Sigmoid colon (tissue), 7 donors: ENCODE measurements at regions of chr13 and their contacts with region 1.

Region 1: GRCh38 chr13:97116754-97117153 is 105.4 kb upstream of the MBNL2 start:
- DNase-seq: peak; percentile 74
- H3K4me3 ChIP-seq: no peak overlapping the region
- H3K27ac ChIP-seq: peak overlapping the region; percentile 81 to 90 (median 84)
- H3K4me1 ChIP-seq: peaks cover 0 to 89% (median 75%) of the 10 kb centered on the region in 4 donors
- H3K27me3 ChIP-seq: no peaks in the 10 kb centered on the region
- CTCF ChIP-seq: no peak
- EP300 ChIP-seq: peak in 3 of 4 donors; percentile 51 to 83 (median 80)
- POLR2A ChIP-seq: no peak

Region 2: DNA sequence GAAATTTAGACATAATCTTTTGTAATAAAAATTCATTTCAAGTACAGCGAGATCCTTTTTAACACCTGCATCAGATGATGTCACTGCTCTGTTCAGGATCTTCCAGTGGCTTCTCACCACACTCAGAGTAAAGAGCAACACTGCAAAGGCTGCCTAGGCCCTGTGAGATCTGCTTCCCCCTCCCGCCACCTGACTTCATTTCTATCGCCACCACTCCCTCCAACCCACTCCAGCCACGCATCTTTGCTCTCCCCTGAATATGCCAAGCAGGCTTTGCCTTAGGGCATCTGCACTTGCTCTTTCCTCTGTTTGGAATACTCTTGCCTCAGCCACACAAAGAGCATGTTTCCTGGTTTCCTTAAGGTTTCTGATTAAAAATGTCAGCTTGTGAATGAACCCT is 163.7 kb after region 1 on chr13:
- intact Hi-C with region 1: loop called (anchors 5 kb)
- DNase-seq: no peak
- H3K4me3 ChIP-seq: no peak overlapping the region
- H3K27ac ChIP-seq: peak overlapping the region; percentile 72 to 89 (median 80)
- H3K4me1 ChIP-seq: peaks cover 0 to 99% (median 91%) of the 10 kb centered on the region in 4 donors
- H3K27me3 ChIP-seq: no peaks in the 10 kb centered on the region
- CTCF ChIP-seq: no peak
- EP300 ChIP-seq: no peak
- POLR2A ChIP-seq: no peak

Region 3: GRCh38 chr13:97627566-97627965 is 510.8 kb after region 1 on chr13:
- intact Hi-C with region 1: no loop called
- DNase-seq: no peak
- H3K4me3 ChIP-seq: no peak overlapping the region
- H3K27ac ChIP-seq: no peak overlapping the region
- H3K4me1 ChIP-seq: no peaks in the 10 kb centered on the region
- H3K27me3 ChIP-seq: no peaks in the 10 kb centered on the region
- CTCF ChIP-seq: no peak
- EP300 ChIP-seq: no peak
- POLR2A ChIP-seq: no peak

Region 4: GRCh38 chr13:98112456-98112855 is 995.7 kb after region 1 on chr13:
- intact Hi-C with region 1: no loop called
- DNase-seq: no peak
- H3K4me3 ChIP-seq: no peak overlapping the region
- H3K27ac ChIP-seq: no peak overlapping the region
- H3K4me1 ChIP-seq: no peaks in the 10 kb centered on the region
- H3K27me3 ChIP-seq: no peaks in the 10 kb centered on the region
- CTCF ChIP-seq: no peak
- EP300 ChIP-seq: no peak
- POLR2A ChIP-seq: no peak